PC-9 (cell line): ENCODE measurements at regions of chr2 and their contacts with region 1.

Region 1: DNA sequence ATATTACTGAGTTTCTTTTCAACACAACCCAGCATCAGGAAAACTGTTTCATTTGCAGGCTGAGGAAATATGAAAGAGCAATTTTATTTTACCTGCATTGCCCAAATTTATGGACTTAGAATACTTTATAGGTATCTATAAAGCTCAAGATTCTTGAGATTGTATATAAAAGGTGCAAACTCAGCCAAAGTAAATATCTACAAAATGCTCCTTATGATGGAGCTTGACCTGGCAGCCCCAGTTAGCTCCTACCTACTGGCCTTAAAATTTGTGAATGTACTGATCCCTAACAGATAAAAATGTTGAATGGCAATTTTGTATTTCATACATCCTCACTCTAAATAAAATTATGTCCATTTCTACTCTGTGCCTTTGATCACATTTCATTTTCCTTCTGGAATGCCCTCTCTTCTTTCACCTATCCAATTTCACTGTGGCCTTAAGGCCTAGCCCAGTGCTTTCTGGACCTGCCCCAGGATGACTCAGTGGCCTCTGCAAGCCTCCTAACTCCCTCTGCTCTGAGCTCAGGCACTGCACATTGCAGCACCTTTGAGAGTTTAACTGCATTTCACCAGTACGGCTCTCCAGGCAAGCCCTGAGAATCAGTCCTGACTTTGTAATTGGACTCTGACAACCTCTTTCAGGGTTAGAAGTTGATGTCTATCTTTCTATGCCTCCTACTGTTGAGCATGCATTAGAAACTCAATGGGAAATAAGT is 126.0 kb downstream of the ANTXR1 start:
- DNase-seq: peak; percentile 70 to 77
- H3K4me3 ChIP-seq: 0 out of 2 replicates have a peak overlapping the region, but pooled peaks have one; percentile 1
- H3K27ac ChIP-seq: peak overlapping the region; percentile 69
- H3K4me1 ChIP-seq: peaks cover 37% of the 10 kb centered on the region
- H3K27me3 ChIP-seq: no peaks in the 10 kb centered on the region
- CTCF ChIP-seq: no peak

Region 2: DNA sequence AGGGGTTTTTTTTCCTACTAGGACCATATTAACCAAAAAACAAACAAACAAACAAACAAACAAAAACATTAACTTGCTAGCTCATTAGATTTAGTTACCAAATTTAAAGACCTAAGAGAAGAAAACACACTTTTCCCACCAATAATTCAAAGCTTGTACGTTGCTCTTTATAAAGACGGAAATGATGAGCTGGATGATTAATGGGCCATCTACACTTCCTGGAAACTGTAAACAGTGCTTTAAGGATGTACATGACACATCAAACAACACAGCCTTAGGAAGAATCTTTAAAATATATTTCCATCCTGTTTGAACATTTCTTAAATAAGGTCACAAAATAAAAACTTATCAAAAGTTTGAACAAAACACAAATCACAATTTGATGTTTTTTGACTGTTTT is 268.7 kb before region 1 on chr2:
- CTCF ChIA-PET with region 1: no interaction called
- POLR2A ChIA-PET with region 1: no interaction called
- intact Hi-C with region 1: no loop called
- DNase-seq: no peak
- H3K4me3 ChIP-seq: no peak overlapping the region
- H3K27ac ChIP-seq: no peak overlapping the region
- H3K4me1 ChIP-seq: no peaks in the 10 kb centered on the region
- H3K27me3 ChIP-seq: no peaks in the 10 kb centered on the region; the same call in 1 of the 2 replicates
- CTCF ChIP-seq: no peak

Region 3: DNA sequence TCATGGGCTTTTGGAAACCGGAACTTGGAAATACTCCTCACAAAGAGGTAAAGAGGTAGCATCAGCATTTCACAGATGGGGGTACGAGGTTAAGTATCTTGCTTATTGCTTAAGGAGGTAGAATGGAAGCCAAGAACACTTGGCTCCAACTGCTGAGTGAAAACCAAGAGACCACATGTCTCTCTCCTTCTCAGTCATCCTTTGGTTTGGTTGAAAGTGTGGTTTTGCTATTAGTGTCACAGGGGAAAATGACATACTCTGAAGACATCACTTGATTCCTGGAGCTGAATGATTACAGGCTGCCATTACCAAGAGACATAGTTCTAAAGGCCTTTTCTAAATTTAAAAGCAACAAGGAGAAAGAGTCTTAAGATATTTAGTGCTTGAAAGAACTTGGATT is 84.5 kb before region 1 on chr2:
- CTCF ChIA-PET with region 1: no interaction called
- POLR2A ChIA-PET with region 1: no interaction called
- intact Hi-C with region 1: no loop called
- DNase-seq: no peak
- H3K4me3 ChIP-seq: no peak overlapping the region
- H3K27ac ChIP-seq: no peak overlapping the region
- H3K4me1 ChIP-seq: no peaks in the 10 kb centered on the region; the same call in 1 of the 2 replicates
- H3K27me3 ChIP-seq: no peaks in the 10 kb centered on the region
- CTCF ChIP-seq: no peak

Region 4: DNA sequence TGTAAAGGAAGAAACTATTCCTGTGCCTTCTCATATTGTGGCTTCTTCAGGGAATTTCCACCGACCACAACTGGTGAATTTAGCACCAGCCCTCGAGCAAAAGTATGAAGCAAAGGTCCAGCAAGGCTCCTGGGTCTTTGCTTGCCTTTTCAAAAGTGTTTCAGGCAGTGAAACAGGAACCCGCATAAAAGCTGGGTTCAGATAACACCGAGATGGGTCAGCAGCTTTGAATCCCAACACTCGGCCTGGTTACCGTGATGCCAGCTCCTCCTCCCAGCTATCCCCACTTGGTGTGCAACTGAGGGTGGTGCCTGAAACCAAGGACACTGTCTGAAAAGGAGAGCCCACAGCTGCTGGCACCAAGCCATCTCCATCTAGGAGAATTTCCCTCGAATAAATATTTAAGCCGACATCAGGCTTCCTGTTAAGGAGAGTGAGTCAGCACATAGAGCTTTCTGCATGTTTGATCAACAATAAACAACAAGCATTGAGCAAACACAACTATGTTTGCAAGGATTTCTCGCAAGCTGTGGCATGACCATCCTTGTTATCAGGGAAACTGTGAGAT is 56.4 kb before region 1 on chr2:
- CTCF ChIA-PET with region 1: no interaction called
- POLR2A ChIA-PET with region 1: no interaction called
- intact Hi-C with region 1: loop called (anchors 5 kb)
- DNase-seq: peak; percentile 67 to 78
- H3K4me3 ChIP-seq: no peak overlapping the region
- H3K27ac ChIP-seq: 0 out of 2 replicates have a peak overlapping the region, but pooled peaks have one; percentile 21
- H3K4me1 ChIP-seq: peaks cover 18% of the 10 kb centered on the region
- H3K27me3 ChIP-seq: no peaks in the 10 kb centered on the region
- CTCF ChIP-seq: no peak

Region 5: GRCh38 chr2:69208023-69208595 is 69.2 kb after region 1 on chr2:
- CTCF ChIA-PET with region 1: no interaction called
- POLR2A ChIA-PET with region 1: no interaction called
- intact Hi-C with region 1: no loop called
- DNase-seq: no peak
- H3K4me3 ChIP-seq: no peak overlapping the region
- H3K27ac ChIP-seq: no peak overlapping the region
- H3K4me1 ChIP-seq: no peaks in the 10 kb centered on the region
- H3K27me3 ChIP-seq: no peaks in the 10 kb centered on the region
- CTCF ChIP-seq: peak; percentile 37

Region 6: GRCh38 chr2:69291004-69291650 is 152.2 kb after region 1 on chr2:
- CTCF ChIA-PET with region 1: no interaction called
- POLR2A ChIA-PET with region 1: no interaction called
- intact Hi-C with region 1: no loop called
- DNase-seq: no peak
- H3K4me3 ChIP-seq: no peak overlapping the region
- H3K27ac ChIP-seq: no peak overlapping the region
- H3K4me1 ChIP-seq: no peaks in the 10 kb centered on the region
- H3K27me3 ChIP-seq: no peaks in the 10 kb centered on the region
- CTCF ChIP-seq: no peak